ENCODE measurements at regions of chr7 and their contacts with region 1.

Region 1: GRCh38 chr7:43700059-43700501 is 29.2 kb downstream of the COA1 start:
- DNase-seq: no peak
- H3K4me3 ChIP-seq: no peak overlapping the region
- CTCF ChIP-seq: peak; percentile 22

Region 2: DNA sequence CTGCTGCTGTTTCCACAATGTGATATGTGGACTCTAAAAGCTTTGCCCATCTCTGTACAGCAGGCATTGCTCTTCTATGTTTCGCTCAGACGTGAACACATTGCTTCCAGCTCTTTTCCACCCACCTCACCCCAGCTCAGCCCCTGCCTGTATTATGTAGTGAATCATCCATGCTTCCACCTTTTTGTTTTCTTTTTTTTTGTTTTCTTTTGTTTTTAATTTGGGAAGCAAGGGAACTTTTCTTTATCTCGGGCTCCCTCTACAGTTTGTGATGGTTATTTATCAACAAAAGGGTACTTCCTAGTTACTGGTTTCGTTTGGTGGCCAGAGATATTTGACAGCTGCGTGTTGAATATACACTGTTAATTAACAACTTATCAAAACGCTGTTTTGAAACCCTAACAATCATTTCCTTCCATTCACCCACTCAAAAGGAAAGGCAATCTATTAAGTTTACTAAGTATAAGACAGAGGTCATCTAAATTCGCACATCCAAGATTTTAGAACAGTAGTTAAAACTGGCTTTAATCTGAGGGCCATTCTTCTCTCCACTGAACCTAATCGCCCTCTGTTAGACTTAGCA is 245.1 kb before region 1 on chr7:
- CTCF ChIA-PET with region 1: interaction called, 13 read pairs
- POLR2A ChIA-PET with region 1: no interaction called
- DNase-seq: peak; percentile 3
- H3K4me3 ChIP-seq: no peak overlapping the region
- CTCF ChIP-seq: peak; percentile 29

Region 3: DNA sequence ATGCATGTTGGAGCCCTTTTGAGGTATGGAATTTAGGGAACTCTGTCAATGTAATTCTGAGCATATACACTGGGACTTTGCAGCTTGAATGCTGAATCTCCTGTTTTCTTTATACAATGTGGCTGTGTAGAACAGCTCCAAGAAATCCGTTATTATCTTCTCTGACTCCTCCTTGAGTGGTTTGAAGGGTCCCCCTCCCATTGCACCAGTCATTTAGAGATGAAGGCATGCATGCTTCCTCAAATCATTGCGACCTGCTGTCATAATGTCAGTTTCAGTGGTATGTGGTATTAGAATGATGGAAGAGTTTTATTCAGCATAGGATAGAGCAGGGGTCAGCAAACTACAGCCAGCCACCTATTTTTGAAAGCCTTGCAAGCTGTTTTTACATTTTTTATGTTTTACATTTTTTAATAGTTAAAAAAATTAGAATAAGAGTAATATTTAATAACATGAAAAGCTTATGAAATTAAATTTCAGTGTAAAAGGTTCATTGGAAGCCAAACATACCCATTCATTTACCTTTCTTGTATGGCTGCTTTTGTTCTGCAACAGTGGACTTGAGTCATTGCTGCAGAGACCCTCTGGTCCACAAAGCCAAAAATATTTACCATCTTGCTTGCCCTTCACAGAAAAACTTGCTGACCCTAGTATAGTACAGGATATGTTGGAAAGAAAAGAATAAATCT is 109.1 kb before region 1 on chr7:
- CTCF ChIA-PET with region 1: interaction called, 497 read pairs
- POLR2A ChIA-PET with region 1: no interaction called
- DNase-seq: no peak
- H3K4me3 ChIP-seq: no peak overlapping the region
- CTCF ChIP-seq: no peak

Region 4: DNA sequence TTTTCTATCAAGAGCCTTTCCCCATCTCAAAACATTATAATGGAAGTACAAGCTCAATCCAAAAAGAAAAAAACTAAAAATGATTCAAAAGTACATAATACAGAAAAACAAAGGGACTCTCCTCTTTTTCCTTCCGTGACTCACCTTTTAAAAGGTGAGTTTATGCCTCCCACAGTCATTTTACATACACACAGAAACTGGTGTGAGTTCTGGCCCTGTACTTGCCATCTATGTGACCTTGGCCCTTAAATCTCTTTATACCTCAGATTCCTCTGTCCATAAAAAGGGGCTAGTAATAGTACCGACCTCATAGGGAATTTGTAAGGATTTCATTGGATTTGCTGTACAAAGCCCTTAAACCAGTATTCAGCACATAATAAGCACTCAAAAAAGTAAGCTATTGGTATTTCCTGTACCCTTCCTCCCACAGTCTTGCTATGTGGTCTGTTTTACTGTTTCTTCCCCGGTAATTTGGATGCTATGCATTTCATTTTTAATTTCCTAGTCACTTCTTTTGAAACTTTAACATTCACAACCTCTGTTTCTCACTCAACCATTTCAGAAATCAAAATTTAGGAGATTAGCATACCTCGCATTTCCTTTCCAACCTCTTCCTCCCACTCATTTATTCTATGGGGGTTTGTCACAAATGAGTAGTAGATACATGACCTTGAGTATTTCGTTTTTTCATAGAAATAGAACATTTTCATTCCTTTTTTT is 78.2 kb before region 1 on chr7:
- CTCF ChIA-PET with region 1: interaction called, 59 read pairs
- POLR2A ChIA-PET with region 1: no interaction called
- DNase-seq: no peak
- H3K4me3 ChIP-seq: no peak overlapping the region
- CTCF ChIP-seq: no peak

Region 5: GRCh38 chr7:43639858-43640491 is 60.1 kb before region 1 on chr7:
- CTCF ChIA-PET with region 1: interaction called, 38 read pairs
- POLR2A ChIA-PET with region 1: interaction called, 3 read pairs
- DNase-seq: no peak
- H3K4me3 ChIP-seq: no peak overlapping the region
- CTCF ChIP-seq: no peak

Region 6: GRCh38 chr7:43711503-43711902 is 11.4 kb after region 1 on chr7:
- CTCF ChIA-PET with region 1: interaction called, 24 read pairs
- POLR2A ChIA-PET with region 1: no interaction called
- DNase-seq: no peak
- H3K4me3 ChIP-seq: no peak overlapping the region
- CTCF ChIP-seq: no peak

Region 7: DNA sequence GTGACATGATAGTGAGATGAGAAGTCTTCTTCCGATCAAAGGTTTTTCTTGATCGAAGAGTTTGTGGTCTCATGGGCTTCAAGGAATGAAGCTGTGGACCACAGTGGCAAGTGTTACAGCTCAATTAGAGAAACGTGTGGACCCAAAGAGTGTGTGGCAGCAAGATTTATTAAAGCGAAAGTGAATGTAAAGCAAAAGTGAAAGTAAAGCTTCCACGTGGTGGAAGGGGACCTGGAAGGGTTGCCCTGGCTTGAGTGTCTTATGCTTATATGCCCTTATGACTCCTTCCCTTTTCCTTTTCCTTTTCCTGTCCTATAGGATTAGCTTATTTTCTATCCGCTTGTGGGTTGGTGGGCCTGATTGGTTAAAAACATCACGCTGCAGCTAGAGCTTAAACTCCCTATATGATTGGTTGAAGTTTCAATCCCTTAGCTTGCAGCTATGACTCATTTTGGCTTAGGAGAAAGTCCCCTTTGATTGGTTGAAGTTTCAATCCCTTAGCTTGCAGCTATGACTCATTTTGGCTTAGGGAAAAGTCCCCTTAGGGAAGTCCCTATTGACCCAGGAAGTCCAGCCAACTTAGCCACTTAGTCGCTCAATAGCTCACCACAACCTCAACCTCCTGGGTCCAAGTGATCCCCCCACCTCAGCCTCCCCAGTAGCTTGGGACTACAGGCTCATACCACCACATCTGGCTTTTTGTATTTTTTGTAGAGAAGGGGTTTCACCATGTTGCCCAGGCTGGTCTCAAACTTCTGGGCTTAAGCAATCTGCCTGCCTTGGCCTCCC is 134.6 kb after region 1 on chr7:
- CTCF ChIA-PET with region 1: interaction called, 52 read pairs
- POLR2A ChIA-PET with region 1: no interaction called
- DNase-seq: no peak
- H3K4me3 ChIP-seq: no peak overlapping the region
- CTCF ChIP-seq: no peak